ENCODE measurements at regions of chr6 and their contacts with region 1.

Region 1: GRCh38 chr6:28001351-28002135 is 44.5 kb downstream of the OR2B6 start:
- DNase-seq: no peak
- H3K4me3 ChIP-seq: no peak overlapping the region
- H3K27ac ChIP-seq: no peak overlapping the region
- H3K4me1 ChIP-seq: no peaks in the 10 kb centered on the region
- H3K27me3 ChIP-seq: peaks cover 3% of the 10 kb centered on the region
- CTCF ChIP-seq: no peak

Region 2: GRCh38 chr6:27911956-27912446 is 89.5 kb before region 1 on chr6 and contains the start of gene OR2B2:
- CTCF ChIA-PET with region 1: no interaction called
- dilution Hi-C with region 1: loop called (anchors 5 kb)
- in situ Hi-C with region 1: no loop called
- intact Hi-C with region 1: no loop called
- DNase-seq: peak; percentile 0
- H3K4me3 ChIP-seq: no peak within 1 kb of the TSS
- H3K27ac ChIP-seq: no peak within 1 kb of the TSS
- H3K4me1 ChIP-seq: peaks cover 6% of the 10 kb centered on the region
- H3K27me3 ChIP-seq: no peaks in the 10 kb centered on the region
- CTCF ChIP-seq: no peak
- total RNA-seq, gene OR2B2: not detected

Region 3: DNA sequence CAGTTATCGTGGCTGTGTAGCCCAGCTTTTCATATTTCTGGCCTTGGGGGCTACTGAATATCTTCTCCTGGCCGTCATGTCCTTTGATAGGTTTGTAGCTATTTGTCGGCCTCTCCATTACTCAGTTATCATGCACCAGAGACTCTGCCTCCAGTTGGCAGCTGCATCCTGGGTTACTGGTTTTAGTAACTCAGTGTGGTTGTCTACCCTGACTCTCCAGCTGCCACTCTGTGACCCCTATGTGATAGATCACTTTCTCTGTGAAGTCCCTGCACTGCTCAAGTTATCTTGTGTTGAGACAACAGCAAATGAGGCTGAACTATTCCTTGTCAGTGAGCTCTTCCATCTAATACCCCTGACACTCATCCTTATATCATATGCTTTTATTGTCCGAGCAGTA is 44.0 kb before region 1 on chr6:
- CTCF ChIA-PET with region 1: no interaction called
- dilution Hi-C with region 1: loop called (anchors 5 kb)
- in situ Hi-C with region 1: no loop called
- intact Hi-C with region 1: no loop called
- DNase-seq: no peak
- H3K4me3 ChIP-seq: no peak overlapping the region
- H3K27ac ChIP-seq: no peak overlapping the region
- H3K4me1 ChIP-seq: no peaks in the 10 kb centered on the region
- H3K27me3 ChIP-seq: peaks cover 2% of the 10 kb centered on the region
- CTCF ChIP-seq: no peak

Measured in mammary epithelial cell (primary cell).